CD4-positive, alpha-beta memory T cell (primary cell): ENCODE measurements at regions of chr6 and their contacts with region 1.

Region 1: GRCh38 chr6:31114970-31115849 is 610 bp downstream of the PSORS1C1 start:
- DNase-seq: peak in 1 of 5 donors; percentile 40
- H3K4me3 ChIP-seq: no peak overlapping the region
- H3K4me3 Mint-ChIP-seq: peak overlapping the region in 2 of 8 donors; percentile 16 to 41
- H3K27ac ChIP-seq: no peak overlapping the region
- H3K27ac Mint-ChIP-seq: peak overlapping the region in 4 of 7 donors; percentile 12 to 80 (median 46)
- H3K4me1 ChIP-seq: peaks cover 5% of the 10 kb centered on the region
- H3K4me1 Mint-ChIP-seq: peaks cover 2 to 8% (median 5%) of the 10 kb centered on the region in 4 donors
- H3K27me3 ChIP-seq: no peaks in the 10 kb centered on the region
- H3K27me3 Mint-ChIP-seq: peaks cover 2 to 3% of the 10 kb centered on the region in 2 donors

Region 2: DNA sequence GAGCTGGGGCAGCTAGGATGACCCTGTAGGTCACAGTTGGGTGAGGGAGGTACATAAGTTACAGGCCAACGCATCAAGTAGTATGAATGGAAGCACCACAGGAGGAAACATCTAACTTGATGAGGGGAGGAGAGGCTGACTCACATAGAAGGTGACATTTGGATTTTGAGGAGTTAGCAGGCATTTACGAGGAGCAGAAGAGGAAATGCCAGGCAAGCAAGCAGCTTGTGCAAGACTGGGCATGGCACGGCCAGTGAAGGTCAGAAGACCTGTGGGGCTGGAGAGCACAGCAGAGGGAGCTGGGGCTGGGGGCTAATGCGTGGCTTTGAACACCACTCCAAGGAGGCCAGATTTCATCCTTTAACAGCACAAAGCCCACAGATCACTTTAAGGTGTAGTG is 67.1 kb before region 1 on chr6:
- CTCF ChIA-PET with region 1: no interaction called
- POLR2A ChIA-PET with region 1: no interaction called
- intact Hi-C with region 1: no loop called
- DNase-seq: no peak
- H3K4me3 ChIP-seq: no peak overlapping the region
- H3K4me3 Mint-ChIP-seq: no peak overlapping the region
- H3K27ac ChIP-seq: no peak overlapping the region
- H3K27ac Mint-ChIP-seq: no peak overlapping the region
- H3K4me1 ChIP-seq: no peaks in the 10 kb centered on the region
- H3K4me1 Mint-ChIP-seq: peaks cover 0 to 3% (median 0%) of the 10 kb centered on the region in 4 donors
- H3K27me3 ChIP-seq: no peaks in the 10 kb centered on the region
- H3K27me3 Mint-ChIP-seq: peaks cover 30 to 40% of the 10 kb centered on the region in 2 donors

Region 3: GRCh38 chr6:31058128-31058894 is 56.9 kb before region 1 on chr6:
- CTCF ChIA-PET with region 1: interaction called, 10 read pairs
- POLR2A ChIA-PET with region 1: no interaction called
- intact Hi-C with region 1: no loop called
- DNase-seq: peak in 2 of 5 donors; percentile 5 to 11
- H3K4me3 ChIP-seq: no peak overlapping the region
- H3K4me3 Mint-ChIP-seq: no peak overlapping the region
- H3K27ac ChIP-seq: no peak overlapping the region
- H3K27ac Mint-ChIP-seq: no peak overlapping the region
- H3K4me1 ChIP-seq: no peaks in the 10 kb centered on the region
- H3K4me1 Mint-ChIP-seq: no peaks in the 10 kb centered on the region
- H3K27me3 ChIP-seq: no peaks in the 10 kb centered on the region
- H3K27me3 Mint-ChIP-seq: peaks cover 8 to 21% of the 10 kb centered on the region in 2 donors

Region 4: GRCh38 chr6:31103136-31103535 is 12.1 kb before region 1 on chr6:
- CTCF ChIA-PET with region 1: interaction called, 40 read pairs
- POLR2A ChIA-PET with region 1: interaction called, 3 read pairs
- intact Hi-C with region 1: no loop called
- DNase-seq: no peak
- H3K4me3 ChIP-seq: no peak overlapping the region
- H3K4me3 Mint-ChIP-seq: peak overlapping the region in 1 of 8 donors; percentile 41
- H3K27ac ChIP-seq: no peak overlapping the region
- H3K27ac Mint-ChIP-seq: no peak overlapping the region
- H3K4me1 ChIP-seq: no peaks in the 10 kb centered on the region
- H3K4me1 Mint-ChIP-seq: peaks cover 0 to 9% (median 6%) of the 10 kb centered on the region in 4 donors
- H3K27me3 ChIP-seq: no peaks in the 10 kb centered on the region
- H3K27me3 Mint-ChIP-seq: no peaks in the 10 kb centered on the region

Region 5: DNA sequence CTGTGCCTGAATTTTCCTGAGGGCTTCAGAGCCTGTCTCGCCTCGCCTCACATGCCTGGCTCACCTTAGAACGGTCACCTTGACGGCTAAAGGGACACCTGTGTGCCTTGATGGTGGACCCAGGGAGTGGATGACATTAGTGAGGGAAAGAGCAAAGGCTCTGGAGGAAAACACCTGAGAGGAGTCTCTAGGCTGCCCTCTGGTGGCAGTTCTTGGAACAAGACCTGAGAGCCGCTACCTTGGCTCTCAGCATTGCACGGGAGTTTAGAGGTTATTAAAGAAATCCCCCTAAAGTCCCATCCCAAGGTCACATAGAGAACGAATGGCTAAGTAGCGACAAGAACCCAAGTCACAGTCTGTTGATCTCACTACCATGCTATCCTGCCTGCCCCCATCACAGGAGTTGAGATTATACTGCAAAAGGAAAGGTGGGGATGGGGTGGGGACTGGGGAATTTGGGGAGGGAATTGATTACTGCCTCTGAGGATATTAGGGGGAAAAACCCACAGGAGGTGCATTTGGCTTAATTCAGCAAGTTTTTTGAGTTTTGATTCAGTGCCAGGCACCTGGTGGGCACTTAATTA is 13.0 kb after region 1 on chr6:
- CTCF ChIA-PET with region 1: interaction called, 20 read pairs
- POLR2A ChIA-PET with region 1: no interaction called
- intact Hi-C with region 1: no loop called
- DNase-seq: peak; percentile 57 to 70 (median 62)
- H3K4me3 ChIP-seq: no peak overlapping the region
- H3K4me3 Mint-ChIP-seq: no peak overlapping the region
- H3K27ac ChIP-seq: no peak overlapping the region
- H3K27ac Mint-ChIP-seq: peak overlapping the region in 3 of 7 donors; percentile 7 to 52 (median 24)
- H3K4me1 ChIP-seq: peaks cover 3% of the 10 kb centered on the region
- H3K4me1 Mint-ChIP-seq: peaks cover 2 to 8% (median 7%) of the 10 kb centered on the region in 4 donors
- H3K27me3 ChIP-seq: no peaks in the 10 kb centered on the region
- H3K27me3 Mint-ChIP-seq: peaks cover 3 to 6% of the 10 kb centered on the region in 2 donors